Common myeloid progenitor, CD34-positive (primary cell): ENCODE measurements at regions of chr19 and their contacts with region 1.

Region 1: DNA sequence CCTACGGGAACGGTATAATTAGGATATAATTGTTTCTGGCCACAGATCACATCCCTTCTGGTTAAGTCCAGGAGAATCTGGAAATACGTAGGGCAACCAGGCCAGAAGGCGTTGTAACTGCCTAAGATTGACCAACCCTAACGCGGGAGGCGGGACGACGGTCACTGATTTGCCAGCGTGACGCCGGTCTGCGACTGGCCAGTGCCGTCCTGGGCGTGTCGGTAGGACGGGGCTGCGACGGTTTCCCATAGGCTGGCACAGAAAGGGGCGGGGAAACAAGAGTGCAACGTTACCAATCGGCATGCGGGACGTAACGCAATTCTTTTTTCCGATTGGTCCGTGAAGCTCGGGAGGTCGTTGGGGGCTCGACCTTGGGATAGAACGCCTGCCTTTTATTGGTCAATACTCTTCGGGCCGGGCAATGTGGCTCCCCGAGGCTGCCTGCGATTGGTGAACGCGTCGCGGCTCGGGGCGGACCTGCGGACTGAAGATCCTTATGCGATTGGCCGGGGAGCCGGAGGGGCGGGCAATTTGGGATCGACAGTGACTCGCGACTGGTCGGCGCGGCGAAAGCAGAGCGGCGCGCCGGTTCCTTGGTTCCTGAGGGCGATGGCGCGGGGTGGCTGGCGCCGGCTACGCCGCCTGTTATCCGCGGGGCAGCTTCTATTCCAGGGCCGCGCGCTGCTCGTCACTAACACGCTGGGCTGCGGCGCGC is at the start of gene MPV17L2:
- DNase-seq: peak; percentile 100
- H3K4me3 ChIP-seq: peak within 1 kb of the TSS; percentile 55 to 89 (median 86)
- H3K27ac ChIP-seq: peak within 1 kb of the TSS; percentile 33 to 68
- H3K4me1 ChIP-seq: peaks cover 9 to 28% (median 23%) of the 10 kb centered on the region in 4 experiments
- H3K27me3 ChIP-seq: no peaks in the 10 kb centered on the region

Region 2: GRCh38 chr19:18167975-18168645 is 24.7 kb before region 1 on chr19:
- CTCF ChIA-PET with region 1: interaction called, 13 read pairs
- POLR2A ChIA-PET with region 1: no interaction called
- DNase-seq: peak; percentile 63 to 79 (median 74)
- H3K4me3 ChIP-seq: no peak overlapping the region
- H3K27ac ChIP-seq: no peak overlapping the region
- H3K4me1 ChIP-seq: peaks cover 0 to 18% (median 12%) of the 10 kb centered on the region in 4 experiments
- H3K27me3 ChIP-seq: no peaks in the 10 kb centered on the region

Region 3: DNA sequence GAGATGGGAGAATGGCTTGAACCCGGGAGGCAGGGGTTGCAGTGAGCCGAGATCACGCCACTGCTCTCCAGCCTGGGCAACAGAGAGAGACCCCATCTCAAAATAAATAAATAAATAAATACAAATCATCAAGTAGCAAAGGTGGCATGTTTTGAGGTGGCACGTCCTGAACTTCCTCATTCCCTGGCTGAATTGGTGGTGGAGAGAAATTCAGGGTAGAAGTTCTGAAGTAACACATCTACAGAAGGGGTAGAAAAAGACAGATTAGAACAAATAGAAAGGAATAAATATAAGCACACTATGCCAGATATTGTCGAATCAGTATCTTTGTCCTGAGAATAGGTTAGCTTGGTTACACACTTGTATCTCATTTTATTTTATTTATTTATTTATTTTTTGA is 12.9 kb before region 1 on chr19:
- CTCF ChIA-PET with region 1: interaction called, 21 read pairs
- POLR2A ChIA-PET with region 1: no interaction called
- DNase-seq: peak in 2 of 3 donors; percentile 61 to 65
- H3K4me3 ChIP-seq: no peak overlapping the region
- H3K27ac ChIP-seq: no peak overlapping the region
- H3K4me1 ChIP-seq: peaks cover 0 to 23% (median 11%) of the 10 kb centered on the region in 4 experiments
- H3K27me3 ChIP-seq: no peaks in the 10 kb centered on the region

Region 4: DNA sequence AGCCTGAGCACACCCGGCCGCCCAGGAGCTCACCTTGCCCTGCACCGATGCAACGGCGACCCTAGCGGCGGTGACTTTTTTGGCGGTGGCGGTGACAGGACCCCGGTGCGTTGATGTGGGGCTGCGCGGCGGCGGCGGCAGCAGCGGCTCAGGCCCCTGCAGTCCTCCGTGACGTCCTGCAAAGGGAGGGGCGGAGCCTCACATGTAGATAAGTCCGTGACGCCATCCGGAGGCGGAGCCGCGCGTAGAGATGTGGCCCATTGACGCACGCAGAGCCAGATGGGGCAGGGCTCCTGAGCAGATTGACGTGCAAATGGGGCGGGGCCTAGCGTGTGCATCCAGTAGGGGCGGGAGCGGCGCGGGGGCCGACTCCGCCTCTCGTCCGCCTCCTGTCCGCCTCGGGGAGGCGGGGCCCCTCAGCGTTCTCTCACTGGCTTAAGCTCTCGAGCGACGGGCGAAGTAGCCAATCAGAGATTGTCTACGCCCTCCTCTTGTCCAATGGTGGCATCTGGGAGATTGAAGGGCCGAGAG is 11.1 kb after region 1 on chr19 and contains the start of gene RAB3A:
- CTCF ChIA-PET with region 1: interaction called, 10 read pairs
- POLR2A ChIA-PET with region 1: interaction called, 8 read pairs
- DNase-seq: peak; percentile 100
- H3K4me3 ChIP-seq: peak within 1 kb of the TSS; percentile 49 to 92 (median 75)
- H3K27ac ChIP-seq: peak within 1 kb of the TSS; percentile 54 to 89
- H3K4me1 ChIP-seq: peaks cover 0 to 30% (median 28%) of the 10 kb centered on the region in 4 experiments
- H3K27me3 ChIP-seq: no peaks in the 10 kb centered on the region

Region 5: DNA sequence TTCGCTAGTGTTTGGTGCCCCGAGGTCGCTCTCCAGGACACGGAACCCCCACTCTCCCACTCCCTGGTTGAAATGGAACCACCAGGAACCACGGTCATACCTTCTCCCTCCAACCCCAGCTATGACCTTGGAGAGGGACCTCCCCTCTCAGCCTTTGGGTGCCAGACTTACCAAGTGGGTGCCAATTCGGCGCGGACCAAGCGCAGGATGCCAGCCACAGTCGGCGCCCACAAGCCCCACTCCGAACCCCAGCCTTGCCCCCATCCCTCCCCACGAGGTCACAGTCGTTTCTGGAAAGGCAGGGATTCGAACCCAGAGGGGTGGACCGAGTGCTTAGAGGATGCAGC is 32.5 kb after region 1 on chr19:
- CTCF ChIA-PET with region 1: no interaction called
- POLR2A ChIA-PET with region 1: no interaction called
- DNase-seq: no peak
- H3K4me3 ChIP-seq: peak overlapping the region in 1 of 7 experiments; percentile 56
- H3K27ac ChIP-seq: no peak overlapping the region
- H3K4me1 ChIP-seq: peaks cover 0 to 19% (median 15%) of the 10 kb centered on the region in 4 experiments
- H3K27me3 ChIP-seq: peaks cover 0 to 76% (median 32%) of the 10 kb centered on the region in 5 experiments